GM12878 (cell line): ENCODE measurements at regions of chr3 and their contacts with region 1.

Region 1: GRCh38 chr3:41698898-41699297 is 263.0 kb downstream of the ULK4 start:
- DNase-seq: no peak
- ATAC-seq: no peak
- H3K4me3 ChIP-seq: no peak overlapping the region
- H3K27ac ChIP-seq: no peak overlapping the region
- H3K4me1 ChIP-seq: no peaks in the 10 kb centered on the region
- H3K27me3 ChIP-seq: no peaks in the 10 kb centered on the region
- CTCF ChIP-seq: no peak
- EP300 ChIP-seq: no peak
- POLR2A ChIP-seq: no peak
- RAD21 ChIP-seq: no peak

Region 2: GRCh38 chr3:41673650-41674049 is 25.2 kb before region 1 on chr3:
- CTCF ChIA-PET with region 1: no interaction called
- POLR2A ChIA-PET with region 1: no interaction called
- RAD21 ChIA-PET with region 1: no interaction called
- SMC1A ChIA-PET with region 1: no interaction called
- in situ Hi-C with region 1: no loop called
- intact Hi-C with region 1: no loop called
- DNase-seq: no peak
- ATAC-seq: no peak
- H3K4me3 ChIP-seq: no peak overlapping the region
- H3K27ac ChIP-seq: no peak overlapping the region
- H3K4me1 ChIP-seq: no peaks in the 10 kb centered on the region
- H3K27me3 ChIP-seq: no peaks in the 10 kb centered on the region
- CTCF ChIP-seq: no peak
- EP300 ChIP-seq: no peak
- POLR2A ChIP-seq: no peak
- RAD21 ChIP-seq: no peak

Region 3: GRCh38 chr3:41881233-41881821 is 182.4 kb after region 1 on chr3:
- CTCF ChIA-PET with region 1: interaction called, 6 read pairs
- POLR2A ChIA-PET with region 1: no interaction called
- RAD21 ChIA-PET with region 1: no interaction called
- SMC1A ChIA-PET with region 1: no interaction called
- in situ Hi-C with region 1: no loop called
- intact Hi-C with region 1: loop called (anchors 5 kb)
- DNase-seq: no peak
- ATAC-seq: no peak
- H3K4me3 ChIP-seq: no peak overlapping the region
- H3K27ac ChIP-seq: no peak overlapping the region
- H3K4me1 ChIP-seq: no peaks in the 10 kb centered on the region
- H3K27me3 ChIP-seq: no peaks in the 10 kb centered on the region
- CTCF ChIP-seq: peak; percentile 44 to 58 (median 57); a peak in 5 of 6 replicates
- EP300 ChIP-seq: no peak
- POLR2A ChIP-seq: no peak
- RAD21 ChIP-seq: peak; percentile 81